ENCODE measurements at regions of chr18 and their contacts with region 1.

Region 1: GRCh38 chr18:50203801-50204604 is 9.1 kb upstream of the MYO5B start:
- DNase-seq: peak; percentile 48 to 61
- H3K4me3 ChIP-seq: no peak overlapping the region
- H3K4me3 Mint-ChIP-seq: peak overlapping the region; percentile 25
- H3K27ac Mint-ChIP-seq: no peak overlapping the region
- H3K4me1 ChIP-seq: no peaks in the 10 kb centered on the region
- H3K4me1 Mint-ChIP-seq: no peaks in the 10 kb centered on the region
- H3K27me3 ChIP-seq: no peaks in the 10 kb centered on the region
- H3K27me3 Mint-ChIP-seq: no peaks in the 10 kb centered on the region
- CTCF ChIP-seq: peak in 1 of 2 experiments; percentile 62

Region 2: DNA sequence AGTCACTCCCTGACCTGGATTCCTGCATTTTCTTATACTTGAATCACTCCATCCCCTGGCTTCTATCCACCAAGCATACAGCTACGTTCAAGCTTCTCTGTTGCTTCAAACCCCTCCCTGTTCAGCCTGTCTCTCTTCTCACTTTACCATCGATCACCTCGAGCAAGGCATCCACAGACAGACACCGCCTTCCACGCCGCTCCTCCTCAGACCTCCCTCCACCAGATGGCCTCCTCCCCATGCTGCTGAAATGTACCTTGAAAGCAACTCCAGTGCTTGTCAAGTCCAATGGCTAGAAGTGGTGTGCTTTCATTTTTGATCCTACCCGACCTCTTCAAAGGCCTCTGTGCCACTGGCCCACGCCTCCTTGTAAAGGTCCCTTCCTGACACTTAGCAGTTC is 259.3 kb before region 1 on chr18:
- CTCF ChIA-PET with region 1: no interaction called
- POLR2A ChIA-PET with region 1: no interaction called
- intact Hi-C with region 1: loop called (anchors 10 kb)
- DNase-seq: peak; percentile 17 to 40
- H3K4me3 ChIP-seq: no peak overlapping the region
- H3K4me3 Mint-ChIP-seq: no peak overlapping the region
- H3K27ac Mint-ChIP-seq: no peak overlapping the region
- H3K4me1 ChIP-seq: no peaks in the 10 kb centered on the region
- H3K4me1 Mint-ChIP-seq: peaks cover 10% of the 10 kb centered on the region
- H3K27me3 ChIP-seq: no peaks in the 10 kb centered on the region
- H3K27me3 Mint-ChIP-seq: no peaks in the 10 kb centered on the region
- CTCF ChIP-seq: no peak

Region 3: DNA sequence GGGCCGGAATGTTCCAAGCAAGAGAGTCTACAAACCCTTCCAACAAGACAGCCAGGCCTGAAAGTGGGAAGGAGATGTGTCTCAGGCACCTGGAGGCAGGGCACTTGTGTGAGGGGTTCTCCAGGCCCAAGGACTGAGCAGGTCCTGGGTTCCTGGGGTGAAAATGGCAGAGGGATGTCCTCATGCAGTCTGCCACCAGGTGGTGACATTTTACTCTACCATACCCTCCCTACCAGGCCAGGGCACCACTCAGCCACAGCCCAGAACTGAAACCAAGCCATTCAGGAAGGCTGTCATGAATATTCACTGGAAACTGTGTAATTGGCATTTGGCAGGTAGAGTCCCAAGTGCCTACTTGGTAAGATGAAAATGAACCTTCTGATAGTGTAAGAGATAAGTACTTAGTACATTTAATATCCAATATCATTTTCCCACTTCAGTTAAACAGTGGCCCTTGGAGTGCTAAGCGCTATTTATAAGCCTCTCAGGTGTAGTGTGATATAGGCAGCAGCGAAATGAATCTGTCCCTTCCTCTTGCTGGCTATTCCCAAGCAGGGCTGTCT is 194.1 kb before region 1 on chr18:
- CTCF ChIA-PET with region 1: no interaction called
- POLR2A ChIA-PET with region 1: no interaction called
- intact Hi-C with region 1: loop called (anchors 5 kb)
- DNase-seq: peak in 1 of 2 experiments; percentile 19
- H3K4me3 ChIP-seq: no peak overlapping the region
- H3K4me3 Mint-ChIP-seq: no peak overlapping the region
- H3K27ac Mint-ChIP-seq: no peak overlapping the region
- H3K4me1 ChIP-seq: peaks cover 4% of the 10 kb centered on the region; the same call in 1 of the 2 replicates
- H3K4me1 Mint-ChIP-seq: peaks cover 7% of the 10 kb centered on the region
- H3K27me3 ChIP-seq: no peaks in the 10 kb centered on the region
- H3K27me3 Mint-ChIP-seq: no peaks in the 10 kb centered on the region
- CTCF ChIP-seq: peak; percentile 9 to 35

Region 4: DNA sequence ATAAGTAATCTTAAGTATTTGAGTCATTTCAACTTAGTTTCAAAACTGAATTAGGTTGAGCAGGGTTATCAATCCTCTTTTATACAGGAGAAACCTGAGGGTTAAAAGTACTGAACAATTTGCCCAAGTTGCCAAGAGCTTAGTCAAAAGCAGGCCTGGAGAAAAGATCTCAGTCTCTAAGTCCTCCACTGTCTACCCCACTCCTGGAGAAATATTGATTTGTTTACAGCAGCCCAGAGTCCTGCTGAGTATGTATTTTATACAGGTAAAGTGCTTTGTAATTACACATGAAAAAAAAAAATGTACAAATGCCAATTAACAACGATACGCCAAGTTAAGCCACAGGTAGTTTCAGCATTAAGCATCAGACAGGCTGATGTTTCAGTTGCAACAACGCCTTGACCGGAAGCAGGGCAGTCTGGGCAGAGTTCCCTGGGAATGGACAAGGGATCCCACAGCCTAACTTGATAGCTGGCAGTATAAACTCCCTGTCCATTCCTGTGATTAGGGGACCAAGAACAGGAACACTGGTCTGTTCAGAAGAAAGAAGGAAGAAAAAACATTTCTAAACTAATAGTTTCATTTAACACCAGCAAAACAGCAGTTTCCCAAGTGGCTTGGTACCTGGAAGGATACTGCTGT is 142.0 kb before region 1 on chr18:
- CTCF ChIA-PET with region 1: interaction called, 11 read pairs
- POLR2A ChIA-PET with region 1: no interaction called
- intact Hi-C with region 1: loop called (anchors 2 kb)
- DNase-seq: no peak
- H3K4me3 ChIP-seq: no peak overlapping the region
- H3K4me3 Mint-ChIP-seq: no peak overlapping the region
- H3K27ac Mint-ChIP-seq: no peak overlapping the region
- H3K4me1 ChIP-seq: no peaks in the 10 kb centered on the region
- H3K4me1 Mint-ChIP-seq: no peaks in the 10 kb centered on the region
- H3K27me3 ChIP-seq: no peaks in the 10 kb centered on the region
- H3K27me3 Mint-ChIP-seq: no peaks in the 10 kb centered on the region
- CTCF ChIP-seq: no peak